Caco-2 (cell line): ENCODE measurements at regions of chr2 and their contacts with region 1.

Region 1: GRCh38 chr2:55712477-55713060 is 18.9 kb upstream of the PNPT1 start:
- DNase-seq: peak; percentile 93 to 96
- H3K4me3 ChIP-seq: no peak overlapping the region
- H3K4me3 Mint-ChIP-seq: peak overlapping the region; percentile 45
- H3K27ac Mint-ChIP-seq: peak overlapping the region; percentile 86
- H3K4me1 ChIP-seq: peaks cover 51% of the 10 kb centered on the region
- H3K4me1 Mint-ChIP-seq: peaks cover 55% of the 10 kb centered on the region
- H3K27me3 ChIP-seq: no peaks in the 10 kb centered on the region
- H3K27me3 Mint-ChIP-seq: no peaks in the 10 kb centered on the region
- CTCF ChIP-seq: no peak

Region 2: DNA sequence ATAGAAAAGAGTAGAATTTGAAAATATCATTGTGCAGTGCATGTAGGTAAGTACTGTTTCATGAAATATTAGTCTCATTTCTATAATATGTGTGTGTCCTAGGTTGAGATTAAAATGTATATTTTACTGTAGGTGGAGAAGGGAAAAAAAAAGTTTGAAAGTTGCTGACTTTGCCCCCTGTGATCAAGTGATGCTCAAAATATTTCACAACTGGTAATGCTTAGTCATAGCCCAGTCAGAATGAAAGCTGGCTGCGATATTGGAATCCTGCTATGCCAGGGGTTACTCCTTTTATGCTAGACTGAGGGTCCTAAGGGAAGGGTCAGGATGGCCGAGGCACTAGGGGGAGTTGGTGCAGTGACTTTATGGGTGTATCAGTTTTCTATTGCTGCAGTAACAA is 212.5 kb before region 1 on chr2:
- CTCF ChIA-PET with region 1: no interaction called
- POLR2A ChIA-PET with region 1: no interaction called
- intact Hi-C with region 1: no loop called
- DNase-seq: no peak
- H3K4me3 ChIP-seq: no peak overlapping the region
- H3K4me3 Mint-ChIP-seq: no peak overlapping the region
- H3K27ac Mint-ChIP-seq: no peak overlapping the region
- H3K4me1 ChIP-seq: no peaks in the 10 kb centered on the region
- H3K4me1 Mint-ChIP-seq: no peaks in the 10 kb centered on the region
- H3K27me3 ChIP-seq: no peaks in the 10 kb centered on the region
- H3K27me3 Mint-ChIP-seq: no peaks in the 10 kb centered on the region
- CTCF ChIP-seq: no peak

Region 3: GRCh38 chr2:55598056-55598795 is 114.3 kb before region 1 on chr2:
- CTCF ChIA-PET with region 1: interaction called, 10 read pairs
- POLR2A ChIA-PET with region 1: no interaction called
- intact Hi-C with region 1: no loop called
- DNase-seq: no peak
- H3K4me3 ChIP-seq: no peak overlapping the region
- H3K4me3 Mint-ChIP-seq: no peak overlapping the region
- H3K27ac Mint-ChIP-seq: no peak overlapping the region
- H3K4me1 ChIP-seq: no peaks in the 10 kb centered on the region
- H3K4me1 Mint-ChIP-seq: no peaks in the 10 kb centered on the region
- H3K27me3 ChIP-seq: no peaks in the 10 kb centered on the region
- H3K27me3 Mint-ChIP-seq: no peaks in the 10 kb centered on the region
- CTCF ChIP-seq: no peak